Activated CD8-positive, alpha-beta T cell treated with anti-CD3 and anti-CD28 coated beads for 36 hours (primary cell): ENCODE measurements at regions of chr19 and their contacts with region 1.

Region 1: DNA sequence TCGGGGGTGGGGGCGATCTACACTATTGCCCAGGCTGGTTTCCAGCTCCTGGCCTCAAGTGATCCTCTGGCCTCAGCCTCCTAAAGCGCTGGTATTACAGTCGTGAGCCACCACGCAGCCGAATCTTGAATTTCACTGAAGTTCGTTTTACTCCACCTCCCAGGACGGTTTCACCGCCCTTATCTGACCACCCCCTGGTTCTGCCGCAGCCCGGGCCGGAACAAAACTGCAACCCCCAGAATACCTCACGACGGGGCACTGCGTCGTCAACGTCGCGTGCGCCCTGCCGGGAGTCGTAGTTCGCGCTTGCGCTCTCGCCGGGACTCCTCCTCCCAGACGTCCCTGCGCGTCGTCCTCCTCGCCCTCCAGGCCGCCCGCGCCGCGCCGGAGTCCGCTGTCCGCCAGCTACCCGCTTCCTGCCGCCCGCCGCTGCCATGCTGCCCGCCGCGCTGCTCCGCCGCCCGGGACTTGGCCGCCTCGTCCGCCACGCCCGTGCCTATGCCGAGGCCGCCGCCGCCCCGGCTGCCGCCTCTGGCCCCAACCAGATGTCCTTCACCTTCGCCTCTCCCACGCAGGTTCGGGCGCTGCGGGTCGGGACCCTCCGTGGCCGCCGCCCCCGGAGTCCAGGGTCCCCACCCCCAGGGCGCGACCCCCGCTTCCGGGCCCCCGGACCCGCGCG is at the start of gene ATP5F1D:
- DNase-seq: peak; percentile 95
- ATAC-seq: peak; percentile 74
- H3K4me3 Mint-ChIP-seq: peak within 1 kb of the TSS; percentile 84
- H3K27ac Mint-ChIP-seq: peak within 1 kb of the TSS; percentile 87
- H3K4me1 Mint-ChIP-seq: peaks cover 30% of the 10 kb centered on the region
- H3K27me3 Mint-ChIP-seq: peaks cover 8% of the 10 kb centered on the region
- CTCF ChIP-seq: no peak
- total RNA-seq, gene ATP5F1D: 186 to 199 TPM

Region 2: GRCh38 chr19:1026189-1027019 is 215.2 kb before region 1 on chr19 and contains the start of gene CNN2:
- CTCF ChIA-PET with region 1: interaction called, 14 read pairs
- POLR2A ChIA-PET with region 1: no interaction called
- intact Hi-C with region 1: no loop called
- DNase-seq: peak; percentile 79
- ATAC-seq: peak; percentile 47
- H3K4me3 Mint-ChIP-seq: peak within 1 kb of the TSS; percentile 89
- H3K27ac Mint-ChIP-seq: peak within 1 kb of the TSS; percentile 90
- H3K4me1 Mint-ChIP-seq: peaks cover 31% of the 10 kb centered on the region
- H3K27me3 Mint-ChIP-seq: no peaks in the 10 kb centered on the region
- CTCF ChIP-seq: no peak
- total RNA-seq, gene CNN2: 97.4 to 98.3 TPM

Region 3: GRCh38 chr19:1045247-1045603 is 196.3 kb before region 1 on chr19:
- CTCF ChIA-PET with region 1: no interaction called
- POLR2A ChIA-PET with region 1: no interaction called
- intact Hi-C with region 1: no loop called
- DNase-seq: peak; percentile 90
- ATAC-seq: peak; percentile 82
- H3K4me3 Mint-ChIP-seq: no peak overlapping the region
- H3K27ac Mint-ChIP-seq: no peak overlapping the region
- H3K4me1 Mint-ChIP-seq: peaks cover 18% of the 10 kb centered on the region
- H3K27me3 Mint-ChIP-seq: no peaks in the 10 kb centered on the region
- CTCF ChIP-seq: no peak

Region 4: DNA sequence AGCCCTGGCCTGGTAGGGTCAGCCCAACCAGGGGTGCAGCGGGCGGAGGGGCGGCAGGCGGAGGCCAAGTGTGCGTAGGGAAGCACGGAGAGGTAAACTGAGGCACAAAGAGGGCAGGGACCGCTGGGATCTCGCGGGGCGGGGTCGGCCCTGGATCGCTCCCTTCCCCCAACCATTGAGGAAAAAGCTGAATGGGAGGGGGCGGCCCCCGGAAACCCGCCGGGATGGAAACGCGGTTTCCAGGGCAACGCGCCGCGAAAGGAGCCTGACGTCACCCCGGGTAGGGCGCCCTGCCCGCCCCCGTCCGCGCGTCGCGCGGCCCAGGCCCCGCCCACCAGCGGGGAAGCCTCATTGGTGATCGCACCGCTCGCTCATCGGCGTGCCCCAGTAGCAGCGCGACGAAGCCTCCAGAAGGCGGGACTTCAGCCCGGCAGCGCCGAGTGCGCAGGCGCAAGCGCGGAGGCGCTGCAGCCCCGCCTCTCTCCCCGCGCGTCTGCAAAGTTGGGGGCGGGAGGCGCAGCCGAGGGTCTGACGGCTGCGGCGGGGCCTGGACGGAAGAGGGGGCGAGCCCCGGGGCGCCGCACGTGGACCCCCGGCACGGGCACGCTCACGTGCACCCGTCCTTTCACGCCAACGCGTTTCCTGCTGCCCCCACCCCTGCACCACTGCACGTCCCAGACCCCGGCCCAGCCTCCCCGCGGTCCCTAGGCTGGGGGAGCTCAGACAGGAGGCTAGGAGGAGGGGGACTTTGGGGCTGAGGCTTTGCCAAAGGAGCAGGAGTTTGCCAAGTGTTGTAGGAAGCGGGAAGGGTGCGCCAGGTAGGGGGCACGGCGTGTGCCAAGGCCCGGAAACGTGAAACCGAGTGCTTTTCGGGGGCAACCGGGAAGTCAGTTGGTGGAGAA is 19.3 kb after region 1 on chr19:
- CTCF ChIA-PET with region 1: interaction called, 449 read pairs
- POLR2A ChIA-PET with region 1: interaction called, 88 read pairs
- intact Hi-C with region 1: no loop called
- DNase-seq: peak; percentile 97
- ATAC-seq: peak; percentile 81
- H3K4me3 Mint-ChIP-seq: peak overlapping the region; percentile 98
- H3K27ac Mint-ChIP-seq: peak overlapping the region; percentile 93
- H3K4me1 Mint-ChIP-seq: peaks cover 54% of the 10 kb centered on the region
- H3K27me3 Mint-ChIP-seq: no peaks in the 10 kb centered on the region
- CTCF ChIP-seq: no peak

Region 5: DNA sequence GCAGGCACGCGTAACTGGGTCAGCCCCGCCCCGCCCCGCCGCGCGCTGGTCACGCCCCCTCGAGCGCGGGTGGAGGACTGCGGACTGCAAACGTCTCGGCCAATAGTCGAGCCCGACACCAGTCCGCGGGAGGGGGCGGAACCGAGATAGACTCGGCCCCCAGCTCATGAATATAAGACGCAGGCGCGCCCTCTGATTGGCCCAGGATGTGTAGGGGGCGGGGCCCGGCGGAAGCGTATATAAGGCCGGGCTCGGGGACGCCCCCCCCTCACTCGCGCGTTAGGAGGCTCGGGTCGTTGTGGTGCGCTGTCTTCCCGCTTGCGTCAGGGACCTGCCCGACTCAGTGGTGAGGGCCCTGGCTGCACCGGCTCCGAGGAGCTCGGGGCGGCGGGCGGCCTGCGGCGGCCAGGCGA is 27.5 kb after region 1 on chr19 and contains the start of gene CIRBP:
- CTCF ChIA-PET with region 1: interaction called, 449 read pairs
- POLR2A ChIA-PET with region 1: interaction called, 88 read pairs
- intact Hi-C with region 1: loop called (anchors 2 kb)
- DNase-seq: peak; percentile 100
- ATAC-seq: peak; percentile 86
- H3K4me3 Mint-ChIP-seq: peak within 1 kb of the TSS; percentile 94
- H3K27ac Mint-ChIP-seq: peak within 1 kb of the TSS; percentile 95
- H3K4me1 Mint-ChIP-seq: peaks cover 71% of the 10 kb centered on the region
- H3K27me3 Mint-ChIP-seq: no peaks in the 10 kb centered on the region
- CTCF ChIP-seq: no peak
- total RNA-seq, gene CIRBP: 161 to 180 TPM

Region 6: DNA sequence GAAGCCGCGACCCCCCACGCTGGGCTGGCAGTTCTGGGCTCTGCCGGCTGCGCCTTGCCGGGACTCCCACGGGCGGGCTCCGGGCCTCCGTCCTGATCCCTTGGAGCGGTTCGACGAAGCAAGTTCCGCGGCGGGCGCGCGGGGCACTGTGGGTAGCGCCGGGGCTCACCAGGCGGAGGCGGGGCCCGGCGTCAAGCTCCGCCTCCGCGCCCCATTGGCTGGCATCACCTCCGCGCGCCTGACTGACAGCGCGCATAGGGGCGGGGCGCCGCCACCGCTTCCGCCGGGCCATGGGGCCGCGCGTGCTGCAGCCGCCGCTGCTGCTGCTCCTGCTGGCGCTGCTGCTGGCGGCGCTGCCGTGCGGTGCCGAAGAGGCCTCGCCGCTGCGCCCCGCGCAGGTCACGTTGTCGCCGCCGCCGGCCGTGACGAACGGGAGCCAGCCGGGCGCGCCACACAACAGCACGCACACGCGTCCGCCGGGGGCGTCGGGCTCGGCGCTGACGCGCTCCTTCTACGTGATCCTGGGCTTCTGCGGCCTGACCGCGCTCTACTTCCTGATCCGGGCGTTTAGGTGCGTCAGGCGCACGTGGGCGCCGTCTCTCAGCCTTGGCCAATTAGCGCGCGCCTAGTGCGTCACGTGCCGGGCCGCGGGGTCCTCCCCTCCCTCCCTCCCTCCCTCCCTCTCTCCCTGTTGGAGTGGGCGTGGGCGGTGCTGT is 33.9 kb after region 1 on chr19 and contains the start of gene FAM174C:
- CTCF ChIA-PET with region 1: interaction called, 65 read pairs
- POLR2A ChIA-PET with region 1: interaction called, 7 read pairs
- intact Hi-C with region 1: no loop called
- DNase-seq: peak; percentile 99
- ATAC-seq: peak; percentile 87
- H3K4me3 Mint-ChIP-seq: peak within 1 kb of the TSS; percentile 88
- H3K27ac Mint-ChIP-seq: peak within 1 kb of the TSS; percentile 98
- H3K4me1 Mint-ChIP-seq: peaks cover 50% of the 10 kb centered on the region
- H3K27me3 Mint-ChIP-seq: no peaks in the 10 kb centered on the region
- CTCF ChIP-seq: no peak
- total RNA-seq, gene FAM174C: 77.0 to 88.0 TPM

Region 7: GRCh38 chr19:1373534-1374249 is 132.1 kb after region 1 on chr19:
- CTCF ChIA-PET with region 1: interaction called, 11 read pairs
- POLR2A ChIA-PET with region 1: no interaction called
- intact Hi-C with region 1: no loop called
- DNase-seq: no peak
- ATAC-seq: no peak
- H3K4me3 Mint-ChIP-seq: no peak overlapping the region
- H3K27ac Mint-ChIP-seq: no peak overlapping the region
- H3K4me1 Mint-ChIP-seq: no peaks in the 10 kb centered on the region
- H3K27me3 Mint-ChIP-seq: no peaks in the 10 kb centered on the region
- CTCF ChIP-seq: no peak